ENCODE measurements at regions of chr1 and their contacts with region 1.

Region 1: GRCh38 chr1:159780583-159781582 is at the start of gene DUSP23:
- DNase-seq: peak; percentile 97 to 99
- H3K4me3 ChIP-seq: peak within 1 kb of the TSS; percentile 63
- H3K4me3 Mint-ChIP-seq: peak within 1 kb of the TSS; percentile 90
- H3K27ac Mint-ChIP-seq: peak within 1 kb of the TSS; percentile 89
- H3K4me1 ChIP-seq: peaks cover 15% of the 10 kb centered on the region
- H3K4me1 Mint-ChIP-seq: peaks cover 16% of the 10 kb centered on the region
- H3K27me3 ChIP-seq: no peaks in the 10 kb centered on the region
- H3K27me3 Mint-ChIP-seq: no peaks in the 10 kb centered on the region
- CTCF ChIP-seq: peak; percentile 94 to 97
- total RNA-seq, gene DUSP23: 40.5 and 44.5 TPM in 2 replicates

Region 2: GRCh38 chr1:159161001-159161718 is 619.7 kb before region 1 on chr1:
- CTCF ChIA-PET with region 1: no interaction called
- POLR2A ChIA-PET with region 1: no interaction called
- intact Hi-C with region 1: loop called (anchors 5 kb)
- DNase-seq: peak; percentile 74 to 82
- H3K4me3 ChIP-seq: no peak overlapping the region
- H3K4me3 Mint-ChIP-seq: no peak overlapping the region
- H3K27ac Mint-ChIP-seq: no peak overlapping the region
- H3K4me1 ChIP-seq: no peaks in the 10 kb centered on the region
- H3K4me1 Mint-ChIP-seq: no peaks in the 10 kb centered on the region
- H3K27me3 ChIP-seq: no peaks in the 10 kb centered on the region
- H3K27me3 Mint-ChIP-seq: peaks cover 20% of the 10 kb centered on the region
- CTCF ChIP-seq: peak; percentile 97 to 99

Region 3: GRCh38 chr1:159421821-159422220 is 359.1 kb before region 1 on chr1:
- CTCF ChIA-PET with region 1: no interaction called
- POLR2A ChIA-PET with region 1: no interaction called
- intact Hi-C with region 1: loop called (anchors 5 kb)
- DNase-seq: no peak
- H3K4me3 ChIP-seq: no peak overlapping the region
- H3K4me3 Mint-ChIP-seq: no peak overlapping the region
- H3K27ac Mint-ChIP-seq: no peak overlapping the region
- H3K4me1 ChIP-seq: no peaks in the 10 kb centered on the region
- H3K4me1 Mint-ChIP-seq: no peaks in the 10 kb centered on the region
- H3K27me3 ChIP-seq: no peaks in the 10 kb centered on the region
- H3K27me3 Mint-ChIP-seq: no peaks in the 10 kb centered on the region
- CTCF ChIP-seq: peak in 1 of 2 experiments; percentile 22

Region 4: DNA sequence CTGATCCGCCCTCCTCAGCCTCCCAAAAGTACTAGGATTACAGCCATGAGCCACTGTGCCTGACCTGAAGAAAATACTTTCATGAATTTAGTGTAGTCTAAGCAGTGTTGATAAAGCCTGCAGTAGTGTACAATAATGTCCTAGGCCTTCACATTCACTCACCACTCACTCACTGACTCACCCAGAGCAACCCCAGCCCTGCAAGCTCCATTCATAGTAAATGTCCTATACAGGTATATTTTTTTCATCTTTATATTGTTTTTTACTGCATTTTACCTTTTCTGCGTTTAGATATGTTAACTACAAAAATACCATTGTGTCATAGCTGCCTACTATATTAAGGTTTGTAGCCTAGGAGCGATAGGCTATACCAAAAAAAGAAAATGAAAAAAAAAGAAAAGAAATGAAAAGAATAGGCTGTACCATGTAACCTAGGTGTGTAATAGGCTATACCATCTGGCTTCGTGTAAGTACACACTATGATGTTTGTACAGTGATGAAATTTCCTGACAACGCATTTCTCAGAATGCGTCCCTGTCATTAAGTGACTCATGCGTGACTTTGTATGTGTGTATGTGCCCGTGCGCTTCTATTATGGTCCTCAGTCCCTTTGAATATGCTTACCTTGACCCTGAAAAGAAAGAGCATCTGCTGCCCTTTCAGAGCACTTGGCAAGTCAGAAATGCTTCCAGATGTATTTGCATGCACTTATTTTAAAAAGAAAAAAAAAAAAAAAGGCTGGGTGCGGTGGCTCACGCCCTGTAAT is 36.6 kb after region 1 on chr1:
- CTCF ChIA-PET with region 1: no interaction called
- POLR2A ChIA-PET with region 1: no interaction called
- intact Hi-C with region 1: no loop called
- DNase-seq: peak in 1 of 2 experiments; percentile 14
- H3K4me3 ChIP-seq: no peak overlapping the region
- H3K4me3 Mint-ChIP-seq: no peak overlapping the region
- H3K27ac Mint-ChIP-seq: no peak overlapping the region
- H3K4me1 ChIP-seq: no peaks in the 10 kb centered on the region
- H3K4me1 Mint-ChIP-seq: no peaks in the 10 kb centered on the region
- H3K27me3 ChIP-seq: no peaks in the 10 kb centered on the region
- H3K27me3 Mint-ChIP-seq: peaks cover 3% of the 10 kb centered on the region
- CTCF ChIP-seq: no peak

Region 5: DNA sequence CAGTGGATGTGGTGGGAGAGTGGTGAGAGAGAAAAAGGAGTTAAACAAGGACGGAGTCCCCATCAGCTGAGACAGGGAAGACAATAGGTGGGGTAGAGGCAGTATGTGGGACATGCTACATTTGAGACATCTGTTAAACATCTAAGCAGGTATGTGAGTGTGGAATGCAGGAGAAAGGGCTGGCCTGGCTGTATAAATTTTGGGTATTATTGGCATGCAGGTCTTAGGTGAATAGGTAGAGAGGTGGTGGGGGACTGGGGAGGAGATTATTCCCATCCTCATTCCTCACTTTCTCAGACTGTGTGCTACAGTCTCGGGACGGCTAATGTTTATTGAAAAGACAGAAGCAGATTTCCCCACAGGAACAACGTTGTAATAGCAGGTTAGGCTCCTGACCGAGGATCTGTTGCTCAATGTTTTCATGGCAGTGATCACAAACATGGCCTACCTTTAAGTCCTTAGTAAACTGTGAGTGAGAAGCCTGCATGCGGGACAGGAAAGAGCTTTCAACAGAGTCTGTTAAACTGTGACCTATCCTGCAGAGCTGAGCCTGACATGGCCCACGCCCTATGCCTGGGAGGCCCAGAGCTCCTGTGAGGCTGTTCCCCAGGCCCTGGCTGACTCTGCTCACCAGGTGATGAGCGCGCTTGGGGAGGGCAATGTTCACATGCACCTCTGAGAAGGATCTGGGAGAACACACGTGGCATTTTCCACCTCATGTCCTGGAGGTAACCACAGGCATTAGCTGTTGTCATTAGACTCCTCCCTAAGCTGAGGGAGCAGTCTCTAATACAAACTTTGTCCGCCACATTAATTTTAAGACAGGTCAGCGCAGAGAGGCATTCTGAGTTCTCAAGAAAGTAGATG is 65.1 kb after region 1 on chr1:
- CTCF ChIA-PET with region 1: interaction called, 4 read pairs
- POLR2A ChIA-PET with region 1: no interaction called
- intact Hi-C with region 1: loop called (anchors 2 kb)
- DNase-seq: peak; percentile 73 to 79
- H3K4me3 ChIP-seq: no peak overlapping the region
- H3K4me3 Mint-ChIP-seq: no peak overlapping the region
- H3K27ac Mint-ChIP-seq: peak overlapping the region; percentile 63
- H3K4me1 ChIP-seq: peaks cover 12% of the 10 kb centered on the region
- H3K4me1 Mint-ChIP-seq: peaks cover 19% of the 10 kb centered on the region
- H3K27me3 ChIP-seq: no peaks in the 10 kb centered on the region
- H3K27me3 Mint-ChIP-seq: no peaks in the 10 kb centered on the region
- CTCF ChIP-seq: no peak

Region 6: DNA sequence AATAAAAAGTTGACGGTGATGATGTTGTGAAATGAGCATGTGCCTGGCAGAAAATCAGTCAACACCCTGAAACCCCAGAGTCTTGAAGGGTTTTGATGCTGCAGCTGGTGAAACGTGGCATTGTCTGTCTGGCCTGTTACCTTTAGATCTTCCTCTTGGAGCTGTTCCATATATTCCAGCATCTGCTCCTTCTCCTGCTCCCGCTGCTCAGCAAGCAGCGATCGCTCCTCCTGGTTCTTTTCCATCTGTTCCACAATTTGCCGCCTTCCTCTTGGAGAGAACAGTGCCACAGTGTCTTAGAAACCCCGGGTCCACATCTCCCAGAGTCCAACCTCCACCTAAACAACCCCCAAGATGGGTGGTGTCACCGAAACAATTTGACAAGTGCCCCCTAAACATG is 103.4 kb after region 1 on chr1:
- CTCF ChIA-PET with region 1: no interaction called
- POLR2A ChIA-PET with region 1: no interaction called
- intact Hi-C with region 1: no loop called
- DNase-seq: no peak
- H3K4me3 ChIP-seq: no peak overlapping the region
- H3K4me3 Mint-ChIP-seq: no peak overlapping the region
- H3K27ac Mint-ChIP-seq: no peak overlapping the region
- H3K4me1 ChIP-seq: no peaks in the 10 kb centered on the region
- H3K4me1 Mint-ChIP-seq: no peaks in the 10 kb centered on the region
- H3K27me3 ChIP-seq: no peaks in the 10 kb centered on the region
- H3K27me3 Mint-ChIP-seq: no peaks in the 10 kb centered on the region
- CTCF ChIP-seq: no peak

Region 7: DNA sequence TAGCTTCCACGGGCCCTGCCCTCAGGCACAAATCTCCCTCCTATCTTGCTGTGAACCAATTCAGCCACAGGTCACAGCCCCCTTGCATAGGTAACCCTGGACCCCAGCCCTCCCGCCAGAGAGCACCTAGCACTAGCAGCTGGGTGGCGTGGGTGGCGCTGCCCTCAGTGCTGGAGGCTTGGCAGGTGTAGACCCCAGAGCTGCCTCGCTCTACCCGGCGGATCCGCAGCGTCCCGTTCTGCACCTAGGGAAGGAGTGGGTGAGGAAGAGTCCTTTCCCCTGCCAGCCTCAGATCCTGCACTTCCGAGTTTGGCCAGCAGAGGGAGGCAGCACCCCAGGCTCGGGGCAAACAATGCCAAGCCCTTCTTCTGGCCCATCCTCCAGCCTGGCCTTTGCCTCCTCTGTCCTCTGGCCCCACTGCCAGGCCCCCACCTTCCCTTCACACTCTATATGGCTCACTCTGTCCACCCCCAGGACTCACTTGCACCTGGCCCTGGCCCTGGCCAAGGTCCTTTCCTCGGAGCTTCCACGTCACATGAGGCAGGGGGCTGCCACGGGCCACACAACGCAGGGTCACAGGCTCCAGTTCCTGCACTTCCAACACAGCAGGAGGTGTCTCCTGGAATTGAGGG is 155.5 kb after region 1 on chr1:
- CTCF ChIA-PET with region 1: interaction called, 3 read pairs
- POLR2A ChIA-PET with region 1: no interaction called
- intact Hi-C with region 1: loop called (anchors 1 kb)
- DNase-seq: peak; percentile 85 to 92
- H3K4me3 ChIP-seq: no peak overlapping the region
- H3K4me3 Mint-ChIP-seq: no peak overlapping the region
- H3K27ac Mint-ChIP-seq: no peak overlapping the region
- H3K4me1 ChIP-seq: peaks cover 65% of the 10 kb centered on the region
- H3K4me1 Mint-ChIP-seq: peaks cover 54% of the 10 kb centered on the region
- H3K27me3 ChIP-seq: no peaks in the 10 kb centered on the region
- H3K27me3 Mint-ChIP-seq: no peaks in the 10 kb centered on the region
- CTCF ChIP-seq: peak; percentile 96 to 99

Measured in Caco-2 (cell line).